CD8-positive, alpha-beta T cell (primary cell): ENCODE measurements at regions of chr2 and their contacts with region 1.

Region 1: GRCh38 chr2:86790676-86791572 is at the start of gene CD8A:
- DNase-seq: peak; percentile 60 to 93 (median 82)
- ATAC-seq: peak; percentile 23
- H3K4me3 ChIP-seq: peak within 1 kb of the TSS; percentile 93 to 98
- H3K4me3 Mint-ChIP-seq: peak within 1 kb of the TSS; percentile 95
- H3K27ac ChIP-seq: peak within 1 kb of the TSS; percentile 95 to 99
- H3K27ac Mint-ChIP-seq: peak within 1 kb of the TSS; percentile 99
- H3K4me1 ChIP-seq: peaks cover 69% of the 10 kb centered on the region
- H3K4me1 Mint-ChIP-seq: peaks cover 73% of the 10 kb centered on the region
- H3K27me3 ChIP-seq: no peaks in the 10 kb centered on the region
- H3K27me3 Mint-ChIP-seq: no peaks in the 10 kb centered on the region
- CTCF ChIP-seq: no peak
- total RNA-seq, gene CD8A: 502 to 503 TPM

Region 2: DNA sequence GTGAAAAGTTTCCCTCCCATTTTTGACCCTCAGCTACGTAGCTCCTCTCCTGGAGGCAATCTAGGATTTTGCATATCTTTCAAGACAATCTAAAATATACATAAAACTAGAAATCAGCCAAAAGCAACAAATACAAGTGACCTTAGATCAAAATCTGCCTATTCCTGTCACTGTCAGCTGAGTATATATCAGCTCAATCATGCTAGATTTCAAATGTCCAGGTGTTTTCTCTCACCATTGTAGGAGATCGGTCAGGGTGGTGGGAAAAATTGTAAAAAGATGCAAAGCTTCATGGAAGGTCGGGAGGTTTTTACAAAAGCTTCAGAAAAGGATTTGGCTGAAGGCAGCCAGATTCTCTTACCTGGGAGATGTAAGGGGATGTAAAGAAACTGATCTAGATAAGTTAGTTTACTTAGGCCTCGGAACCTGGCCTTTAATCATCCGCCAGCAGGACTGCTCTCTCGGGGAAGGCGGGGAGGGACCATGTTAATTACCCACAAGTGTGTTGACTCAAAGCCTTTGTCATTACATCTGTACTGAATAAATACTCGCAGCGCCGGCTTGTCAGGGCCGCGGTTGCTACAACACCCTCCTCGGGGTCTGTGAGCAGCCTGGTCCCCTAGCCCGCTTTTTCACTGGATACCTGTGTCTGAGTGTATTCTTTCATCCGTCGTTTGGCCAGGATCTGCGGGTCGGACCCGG is 234.6 kb before region 1 on chr2:
- CTCF ChIA-PET with region 1: no interaction called
- POLR2A ChIA-PET with region 1: no interaction called
- intact Hi-C with region 1: loop called (anchors 5 to 10 kb)
- DNase-seq: no peak
- ATAC-seq: no peak
- H3K4me3 ChIP-seq: no peak overlapping the region
- H3K4me3 Mint-ChIP-seq: no peak overlapping the region
- H3K27ac ChIP-seq: no peak overlapping the region
- H3K27ac Mint-ChIP-seq: no peak overlapping the region
- H3K4me1 ChIP-seq: peaks cover 47% of the 10 kb centered on the region
- H3K4me1 Mint-ChIP-seq: peaks cover 61% of the 10 kb centered on the region
- H3K27me3 ChIP-seq: no peaks in the 10 kb centered on the region
- H3K27me3 Mint-ChIP-seq: no peaks in the 10 kb centered on the region
- CTCF ChIP-seq: no peak

Region 3: DNA sequence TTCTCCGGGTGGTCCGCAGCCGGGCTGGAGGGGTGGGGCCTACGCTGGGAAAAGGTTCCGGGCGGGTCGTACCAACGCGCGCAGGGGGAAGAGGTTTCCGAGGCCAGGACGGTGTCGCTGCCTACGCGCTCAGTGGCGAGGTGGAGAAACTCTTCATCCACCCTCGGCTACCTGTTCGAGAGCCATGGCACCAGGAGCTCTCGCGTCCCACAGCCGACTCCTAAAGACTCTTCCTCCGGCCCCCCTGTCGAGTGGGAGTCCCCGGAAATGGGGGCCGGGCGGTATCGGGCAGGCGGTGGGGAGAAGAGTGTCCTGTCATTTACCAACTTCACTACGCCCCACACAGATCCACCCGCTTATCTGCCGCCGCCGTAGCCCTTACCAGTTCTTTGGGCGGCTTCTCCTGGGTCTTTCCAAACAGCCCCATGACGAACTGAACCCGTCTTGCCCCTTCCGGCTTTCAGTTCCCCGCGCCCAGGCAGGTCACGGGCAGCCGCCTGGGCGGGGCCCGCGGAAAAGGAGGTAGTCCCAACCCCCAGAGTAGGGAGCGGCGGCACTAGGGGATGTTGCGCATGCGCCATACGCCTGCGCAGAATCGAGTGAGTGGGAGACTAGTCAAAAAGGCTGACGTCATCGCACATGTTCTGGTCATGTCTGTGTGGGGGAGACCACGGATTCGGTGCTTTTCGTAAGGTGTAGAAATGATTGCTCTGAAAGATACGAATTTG is 227.8 kb before region 1 on chr2 and contains the start of gene CHMP3:
- CTCF ChIA-PET with region 1: no interaction called
- POLR2A ChIA-PET with region 1: no interaction called
- intact Hi-C with region 1: loop called (anchors 5 to 10 kb)
- DNase-seq: peak; percentile 92 to 99 (median 95)
- ATAC-seq: peak; percentile 89
- H3K4me3 ChIP-seq: peak within 1 kb of the TSS; percentile 86 to 89
- H3K4me3 Mint-ChIP-seq: peak within 1 kb of the TSS; percentile 95
- H3K27ac ChIP-seq: peak within 1 kb of the TSS; percentile 95 to 99
- H3K27ac Mint-ChIP-seq: peak within 1 kb of the TSS; percentile 99
- H3K4me1 ChIP-seq: peaks cover 36% of the 10 kb centered on the region
- H3K4me1 Mint-ChIP-seq: peaks cover 42% of the 10 kb centered on the region
- H3K27me3 ChIP-seq: no peaks in the 10 kb centered on the region
- H3K27me3 Mint-ChIP-seq: peaks cover 2% of the 10 kb centered on the region
- CTCF ChIP-seq: no peak
- total RNA-seq, gene CHMP3: 61.0 to 63.2 TPM

Region 4: GRCh38 chr2:86825693-86826381 is 34.9 kb after region 1 on chr2:
- CTCF ChIA-PET with region 1: interaction called, 7 read pairs
- POLR2A ChIA-PET with region 1: interaction called, 25 read pairs
- intact Hi-C with region 1: loop called (anchors 1 kb)
- DNase-seq: peak; percentile 70 to 96 (median 82)
- ATAC-seq: peak; percentile 84
- H3K4me3 ChIP-seq: peak overlapping the region; percentile 85 to 88
- H3K4me3 Mint-ChIP-seq: peak overlapping the region; percentile 90
- H3K27ac ChIP-seq: peak overlapping the region; percentile 81 to 91
- H3K27ac Mint-ChIP-seq: peak overlapping the region; percentile 99
- H3K4me1 ChIP-seq: peaks cover 76% of the 10 kb centered on the region
- H3K4me1 Mint-ChIP-seq: peaks cover 77% of the 10 kb centered on the region
- H3K27me3 ChIP-seq: no peaks in the 10 kb centered on the region
- H3K27me3 Mint-ChIP-seq: no peaks in the 10 kb centered on the region
- CTCF ChIP-seq: no peak